Left lung (tissue), 14 donors: ENCODE measurements at regions of chr1 and their contacts with region 1.

Region 1: GRCh38 chr1:58783993-58784757 is at the start of gene JUN:
- DNase-seq: peak; percentile 99 to 100 (median 100)
- ATAC-seq: peak; percentile 82
- H3K4me3 ChIP-seq: peak within 1 kb of the TSS; percentile 78 to 80
- H3K27ac ChIP-seq: peak within 1 kb of the TSS; percentile 97 to 100
- H3K4me1 ChIP-seq: peaks cover 20 to 39% of the 10 kb centered on the region in 2 donors
- H3K27me3 ChIP-seq: peaks cover 0 to 57% of the 10 kb centered on the region in 2 donors
- CTCF ChIP-seq: no peak
- polyA plus RNA-seq, gene JUN: 83.2 to 705 (median 253) TPM

Region 2: GRCh38 chr1:58815069-58815685 is 31.0 kb after region 1 on chr1:
- intact Hi-C with region 1: loop called in 1 of 2 experiments (anchors 2 kb)
- DNase-seq: peak; percentile 42 to 98 (median 82)
- ATAC-seq: peak; percentile 84
- H3K4me3 ChIP-seq: peak overlapping the region; percentile 42 to 57
- H3K27ac ChIP-seq: peak overlapping the region; percentile 88 to 97
- H3K4me1 ChIP-seq: peaks cover 6 to 56% of the 10 kb centered on the region in 2 donors
- H3K27me3 ChIP-seq: no peaks in the 10 kb centered on the region
- CTCF ChIP-seq: no peak

Region 3: GRCh38 chr1:58903514-58904298 is 119.5 kb after region 1 on chr1:
- intact Hi-C with region 1: loop called in 1 of 2 experiments (anchors 10 kb)
- DNase-seq: peak; percentile 91 to 99 (median 94)
- ATAC-seq: peak; percentile 94
- H3K4me3 ChIP-seq: peak overlapping the region; percentile 35 to 52
- H3K27ac ChIP-seq: peak overlapping the region; percentile 97 to 98
- H3K4me1 ChIP-seq: peaks cover 10 to 55% of the 10 kb centered on the region in 2 donors
- H3K27me3 ChIP-seq: no peaks in the 10 kb centered on the region
- CTCF ChIP-seq: no peak

Region 4: GRCh38 chr1:59296358-59297256 is 512.4 kb after region 1 on chr1 and contains the start of gene FGGY:
- intact Hi-C with region 1: loop called in 1 of 2 experiments (anchors 5 kb)
- DNase-seq: peak; percentile 97 to 99 (median 99)
- ATAC-seq: peak; percentile 93
- H3K4me3 ChIP-seq: peak within 1 kb of the TSS; percentile 40 to 44
- H3K27ac ChIP-seq: peak within 1 kb of the TSS; percentile 98
- H3K4me1 ChIP-seq: peaks cover 10 to 47% of the 10 kb centered on the region in 2 donors
- H3K27me3 ChIP-seq: no peaks in the 10 kb centered on the region
- CTCF ChIP-seq: peak in 1 of 2 donors; percentile 9
- polyA plus RNA-seq, gene FGGY: 13.5 to 22.7 (median 17.1) TPM